Gastrocnemius medialis (tissue), 4 donors: ENCODE measurements at regions of chr1 and their contacts with region 1.

Region 1: GRCh38 chr1:168637350-168637991 is 61.1 kb downstream of the XCL1 start:
- DNase-seq: peak in 1 of 2 donors; percentile 30
- ATAC-seq: peak; percentile 60 to 79
- H3K4me3 ChIP-seq: peak overlapping the region in 1 of 4 donors; percentile 9
- H3K27ac ChIP-seq: peak overlapping the region; percentile 88 to 100 (median 94)
- H3K4me1 ChIP-seq: peaks cover 23 to 47% of the 10 kb centered on the region in 2 donors
- H3K27me3 ChIP-seq: no peaks in the 10 kb centered on the region
- CTCF ChIP-seq: peak; percentile 61 to 84 (median 77)
- POLR2A ChIP-seq: peak in 1 of 2 donors; percentile 12

Region 2: DNA sequence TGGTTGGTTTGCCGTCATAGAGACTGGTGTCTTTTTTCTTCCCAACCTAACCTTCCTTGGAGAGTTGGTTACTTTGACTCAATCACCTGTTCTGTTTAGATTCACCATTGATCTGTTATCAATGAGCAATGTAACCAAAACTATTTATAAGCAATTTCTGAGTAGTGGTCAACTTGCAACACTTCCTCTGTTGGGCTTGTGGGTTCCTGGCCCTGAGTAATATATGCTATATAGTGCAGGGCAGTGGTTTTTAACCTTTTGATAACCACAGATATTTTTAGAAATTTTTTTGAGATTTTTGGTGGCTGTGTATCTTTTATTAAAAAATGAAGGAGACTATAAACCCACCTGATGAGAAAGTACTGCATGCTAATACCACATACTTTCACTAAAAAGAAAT is 70.5 kb before region 1 on chr1:
- in situ Hi-C with region 1: no loop called
- intact Hi-C with region 1: no loop called
- DNase-seq: no peak
- ATAC-seq: no peak
- H3K4me3 ChIP-seq: no peak overlapping the region
- H3K27ac ChIP-seq: no peak overlapping the region
- H3K4me1 ChIP-seq: no peaks in the 10 kb centered on the region
- H3K27me3 ChIP-seq: no peaks in the 10 kb centered on the region
- CTCF ChIP-seq: no peak
- POLR2A ChIP-seq: no peak

Region 3: DNA sequence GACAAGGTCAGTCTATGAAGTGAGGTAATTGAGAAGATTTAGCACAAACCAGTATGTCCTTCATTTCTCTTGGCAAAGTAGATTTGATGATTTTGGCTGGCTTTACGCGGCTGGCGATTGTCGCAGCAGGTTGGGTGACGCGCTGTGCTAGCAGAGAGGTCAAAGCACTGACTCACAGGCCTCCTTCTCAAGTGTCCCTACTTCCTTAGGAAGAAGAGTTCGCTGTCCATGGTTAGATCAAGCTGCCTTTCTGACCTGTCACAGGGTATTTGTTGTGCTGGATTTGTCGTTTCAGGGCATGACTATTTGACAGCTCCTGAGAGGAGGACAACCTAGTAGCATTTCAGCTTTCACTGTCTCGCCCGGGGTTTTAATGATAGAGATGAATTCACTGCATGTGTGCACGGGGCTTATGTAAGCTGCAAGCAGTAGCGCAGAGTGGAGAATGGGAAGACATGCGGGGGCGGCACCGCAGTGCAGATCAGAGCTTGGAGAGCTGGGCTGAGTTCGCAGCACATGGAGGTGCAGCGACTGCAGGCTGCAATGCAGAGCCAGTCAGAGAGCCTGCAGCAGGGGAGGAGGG is 28.2 kb before region 1 on chr1:
- in situ Hi-C with region 1: no loop called
- intact Hi-C with region 1: loop called (anchors 1 kb)
- DNase-seq: peak; percentile 86 to 91
- ATAC-seq: peak; percentile 79 to 80
- H3K4me3 ChIP-seq: peak overlapping the region; percentile 35 to 54 (median 46)
- H3K27ac ChIP-seq: peak overlapping the region; percentile 96 to 100 (median 96)
- H3K4me1 ChIP-seq: peaks cover 72 to 79% of the 10 kb centered on the region in 2 donors
- H3K27me3 ChIP-seq: no peaks in the 10 kb centered on the region
- CTCF ChIP-seq: no peak
- POLR2A ChIP-seq: peak; percentile 51 to 87

Region 4: GRCh38 chr1:168719306-168720111 is 82.0 kb after region 1 on chr1:
- in situ Hi-C with region 1: no loop called
- intact Hi-C with region 1: loop called (anchors 5 kb)
- DNase-seq: peak in 1 of 2 donors; percentile 50
- ATAC-seq: peak; percentile 93 to 97
- H3K4me3 ChIP-seq: no peak overlapping the region
- H3K27ac ChIP-seq: peak overlapping the region; percentile 43 to 69 (median 58)
- H3K4me1 ChIP-seq: peaks cover 14 to 18% of the 10 kb centered on the region in 2 donors
- H3K27me3 ChIP-seq: no peaks in the 10 kb centered on the region
- CTCF ChIP-seq: no peak
- POLR2A ChIP-seq: peak in 1 of 2 donors; percentile 30

Region 5: DNA sequence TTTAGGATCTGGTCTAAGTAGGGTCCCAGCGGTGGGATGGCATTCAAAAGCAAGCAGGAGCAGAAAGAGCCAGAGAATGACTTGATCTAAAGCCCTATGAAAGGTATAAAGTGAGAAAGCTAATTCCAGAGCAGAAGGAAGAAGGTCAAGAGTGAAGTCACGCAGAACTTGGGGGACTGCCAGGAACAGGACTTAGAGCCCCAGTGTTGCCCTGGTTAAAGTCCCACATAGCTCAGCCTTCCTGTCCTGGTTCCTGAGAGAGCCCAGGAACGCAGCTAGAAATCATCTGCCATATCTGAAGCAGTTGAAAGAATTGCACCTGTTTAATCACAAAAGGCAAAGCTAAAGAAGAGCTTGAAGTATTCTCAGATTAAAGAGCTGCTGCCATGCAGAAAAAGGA is 308.4 kb after region 1 on chr1:
- in situ Hi-C with region 1: no loop called
- intact Hi-C with region 1: loop called (anchors 5 kb)
- DNase-seq: peak; percentile 48 to 66
- ATAC-seq: peak; percentile 76 to 96
- H3K4me3 ChIP-seq: no peak overlapping the region
- H3K27ac ChIP-seq: peak overlapping the region; percentile 38 to 72 (median 61)
- H3K4me1 ChIP-seq: peaks cover 12 to 17% of the 10 kb centered on the region in 2 donors
- H3K27me3 ChIP-seq: no peaks in the 10 kb centered on the region
- CTCF ChIP-seq: no peak
- POLR2A ChIP-seq: no peak

Region 6: GRCh38 chr1:169193191-169193850 is 555.9 kb after region 1 on chr1:
- in situ Hi-C with region 1: no loop called
- intact Hi-C with region 1: loop called (anchors 2 kb)
- DNase-seq: peak; percentile 29 to 55
- ATAC-seq: peak; percentile 93 to 95
- H3K4me3 ChIP-seq: no peak overlapping the region
- H3K27ac ChIP-seq: peak overlapping the region; percentile 66 to 77 (median 70)
- H3K4me1 ChIP-seq: peaks cover 12 to 14% of the 10 kb centered on the region in 2 donors
- H3K27me3 ChIP-seq: no peaks in the 10 kb centered on the region
- CTCF ChIP-seq: no peak
- POLR2A ChIP-seq: no peak